ENCODE measurements at regions of chr11 and their contacts with region 1.

Region 1: GRCh38 chr11:65040847-65041621 is at the start of gene SAC3D1:
- DNase-seq: peak; percentile 95
- ATAC-seq: peak; percentile 94
- H3K4me3 ChIP-seq: peak within 1 kb of the TSS; percentile 76 to 89 (median 81)
- H3K27ac ChIP-seq: peak within 1 kb of the TSS; percentile 87
- H3K4me1 ChIP-seq: peaks cover 24% of the 10 kb centered on the region
- H3K27me3 ChIP-seq: no peaks in the 10 kb centered on the region
- CTCF ChIP-seq: peak; percentile 10; the same call in 1 of the 2 replicates
- EP300 ChIP-seq: no peak
- POLR2A ChIP-seq: peak; percentile 13 to 66; a peak in 3 of 4 replicates
- RAD21 ChIP-seq: peak; percentile 44
- total RNA-seq, gene SAC3D1: 33.2 and 36.3 TPM in 2 replicates

Region 2: DNA sequence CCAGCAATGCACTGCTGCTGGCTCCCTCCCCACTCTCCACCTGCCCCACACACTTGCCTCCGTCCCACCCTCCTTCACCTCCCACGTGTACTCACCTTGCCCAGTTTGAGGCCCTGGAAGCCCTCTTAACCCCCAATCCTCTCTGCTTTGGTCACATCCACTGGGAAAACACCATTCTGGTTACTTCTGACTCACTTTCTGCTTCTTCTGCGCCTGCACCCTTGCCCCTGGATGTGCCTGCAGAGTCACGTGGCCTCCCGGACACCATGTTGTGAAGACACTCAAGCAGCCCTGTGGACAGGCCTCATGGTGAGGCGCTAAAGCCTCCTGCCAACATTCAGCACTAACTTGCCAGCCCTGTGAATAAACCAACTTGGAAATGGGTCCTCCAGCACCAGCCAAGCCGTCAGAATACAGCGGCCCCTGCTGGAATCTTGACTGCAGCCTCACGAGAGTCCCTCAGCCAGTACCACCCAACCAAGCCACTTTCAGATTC is 19.9 kb after region 1 on chr11:
- CTCF ChIA-PET with region 1: no interaction called
- POLR2A ChIA-PET with region 1: interaction called, 39 read pairs
- in situ Hi-C with region 1: no loop called
- intact Hi-C with region 1: no loop called
- DNase-seq: peak; percentile 42
- ATAC-seq: peak; percentile 56
- H3K4me3 ChIP-seq: no peak overlapping the region
- H3K27ac ChIP-seq: no peak overlapping the region
- H3K4me1 ChIP-seq: peaks cover 82% of the 10 kb centered on the region
- H3K27me3 ChIP-seq: no peaks in the 10 kb centered on the region
- CTCF ChIP-seq: peak; percentile 71
- EP300 ChIP-seq: no peak
- POLR2A ChIP-seq: no peak
- RAD21 ChIP-seq: peak; percentile 65

Region 3: GRCh38 chr11:65069217-65069616 is 28.2 kb after region 1 on chr11:
- CTCF ChIA-PET with region 1: no interaction called
- POLR2A ChIA-PET with region 1: interaction called, 10 read pairs
- in situ Hi-C with region 1: no loop called
- intact Hi-C with region 1: no loop called
- DNase-seq: peak; percentile 63
- ATAC-seq: no peak
- H3K4me3 ChIP-seq: no peak overlapping the region
- H3K27ac ChIP-seq: peak overlapping the region; percentile 29
- H3K4me1 ChIP-seq: peaks cover 36% of the 10 kb centered on the region
- H3K27me3 ChIP-seq: no peaks in the 10 kb centered on the region
- CTCF ChIP-seq: no peak
- EP300 ChIP-seq: no peak
- POLR2A ChIP-seq: no peak
- RAD21 ChIP-seq: no peak